AG04449 (cell line): ENCODE measurements at regions of chr14 and their contacts with region 1.

Region 1: DNA sequence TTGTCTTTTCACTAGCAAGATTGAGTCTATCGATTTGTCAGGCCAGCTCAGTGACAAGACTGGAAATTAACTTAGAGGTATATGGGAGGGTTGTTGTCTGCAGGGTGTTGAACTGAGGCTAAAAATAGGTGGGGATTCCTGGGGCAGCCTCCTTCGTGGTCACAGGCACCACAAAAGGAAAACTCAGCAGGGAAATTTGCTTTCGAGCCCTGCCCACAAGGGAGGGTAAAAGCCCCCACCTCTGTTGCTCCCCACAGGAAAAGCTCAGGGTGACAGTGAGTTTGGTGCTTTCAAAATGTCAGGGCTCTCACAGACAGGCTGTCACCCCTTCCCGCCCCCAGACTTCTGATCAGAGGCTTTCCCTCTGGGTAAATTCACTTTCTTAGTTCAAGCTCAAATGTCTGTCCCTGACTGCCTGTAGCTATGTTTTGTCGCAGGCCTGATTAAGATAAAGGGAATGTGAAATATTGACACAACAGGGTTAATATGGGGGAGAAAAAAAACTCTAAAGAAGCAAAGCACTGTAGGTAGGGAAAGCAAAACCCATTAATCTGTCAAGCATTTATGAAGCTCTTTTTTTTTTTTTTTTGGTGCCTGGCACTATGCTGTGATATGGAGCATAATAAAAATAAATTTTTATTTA is 11.7 kb upstream of the NFKBIA start:
- DNase-seq: no peak
- H3K4me3 ChIP-seq: no peak overlapping the region
- CTCF ChIP-seq: no peak

Region 2: DNA sequence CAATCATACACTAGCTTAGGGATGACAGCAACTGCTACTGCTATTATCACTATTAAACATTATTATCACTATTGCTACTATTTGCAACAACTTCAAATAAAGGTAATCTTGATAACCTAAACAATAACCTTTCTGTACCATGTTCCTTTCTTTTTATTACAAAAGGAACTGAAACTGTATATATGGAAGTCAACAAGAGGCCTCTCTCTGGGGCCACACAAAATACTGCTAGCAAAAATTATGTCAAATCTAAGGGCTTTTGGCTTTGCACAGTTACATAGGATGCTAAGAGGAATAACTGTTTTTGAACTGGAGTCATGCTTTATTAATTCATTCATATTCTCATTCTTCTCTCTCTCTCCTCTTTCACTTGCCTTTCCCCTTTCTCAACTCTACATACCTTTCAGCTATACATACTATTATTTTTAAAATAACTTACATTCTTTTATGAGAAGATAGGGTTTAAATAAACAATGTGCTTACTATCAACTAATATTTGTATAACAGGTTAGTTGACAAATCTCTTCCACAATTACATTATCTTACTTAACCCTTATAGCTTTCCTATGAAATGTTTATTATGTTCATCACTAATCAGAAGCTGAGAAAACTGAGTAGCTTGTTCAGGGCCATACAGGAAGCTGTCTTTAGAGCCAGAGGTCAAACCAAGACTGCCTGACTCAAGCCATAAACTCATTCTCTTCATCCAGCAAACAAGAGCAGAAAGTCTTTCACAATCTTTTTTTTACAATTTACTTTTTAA is 979.9 kb before region 1 on chr14:
- CTCF ChIA-PET with region 1: no interaction called
- POLR2A ChIA-PET with region 1: no interaction called
- DNase-seq: no peak
- H3K4me3 ChIP-seq: no peak overlapping the region
- CTCF ChIP-seq: no peak

Region 3: DNA sequence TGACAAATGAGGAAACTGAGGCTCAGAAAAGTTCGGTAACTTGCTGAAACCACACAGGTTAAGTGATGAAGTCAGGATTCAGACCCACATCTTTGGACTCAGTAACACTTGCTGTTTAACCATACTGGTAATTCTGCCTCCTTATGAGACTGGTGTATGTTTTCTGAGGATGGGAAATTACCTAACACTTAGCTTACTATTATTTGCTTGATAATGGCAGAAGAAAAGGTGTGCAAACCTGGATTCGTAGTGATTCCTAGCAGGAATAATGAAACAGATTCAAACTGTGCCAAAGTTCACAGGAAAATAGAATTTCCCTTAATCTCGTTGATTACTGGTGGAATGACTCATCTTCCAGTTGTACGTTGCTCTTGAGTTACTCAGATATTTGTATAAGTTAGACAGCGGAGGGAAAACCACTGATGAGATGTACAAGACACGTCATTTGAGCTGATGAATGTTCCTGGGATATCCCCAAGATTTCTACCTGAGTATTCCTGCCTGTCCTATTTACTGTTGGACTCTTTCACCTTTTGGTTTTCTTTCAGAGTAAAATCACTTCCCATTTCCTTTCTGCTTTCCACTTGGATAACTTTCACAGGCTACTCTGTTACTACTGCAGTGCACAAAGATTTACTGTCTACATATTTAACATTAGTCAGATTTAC is 256.4 kb before region 1 on chr14:
- CTCF ChIA-PET with region 1: interaction called, 17 read pairs
- POLR2A ChIA-PET with region 1: no interaction called
- DNase-seq: peak; percentile 83
- H3K4me3 ChIP-seq: no peak overlapping the region; the same call in 1 of the 2 replicates
- CTCF ChIP-seq: no peak

Region 4: DNA sequence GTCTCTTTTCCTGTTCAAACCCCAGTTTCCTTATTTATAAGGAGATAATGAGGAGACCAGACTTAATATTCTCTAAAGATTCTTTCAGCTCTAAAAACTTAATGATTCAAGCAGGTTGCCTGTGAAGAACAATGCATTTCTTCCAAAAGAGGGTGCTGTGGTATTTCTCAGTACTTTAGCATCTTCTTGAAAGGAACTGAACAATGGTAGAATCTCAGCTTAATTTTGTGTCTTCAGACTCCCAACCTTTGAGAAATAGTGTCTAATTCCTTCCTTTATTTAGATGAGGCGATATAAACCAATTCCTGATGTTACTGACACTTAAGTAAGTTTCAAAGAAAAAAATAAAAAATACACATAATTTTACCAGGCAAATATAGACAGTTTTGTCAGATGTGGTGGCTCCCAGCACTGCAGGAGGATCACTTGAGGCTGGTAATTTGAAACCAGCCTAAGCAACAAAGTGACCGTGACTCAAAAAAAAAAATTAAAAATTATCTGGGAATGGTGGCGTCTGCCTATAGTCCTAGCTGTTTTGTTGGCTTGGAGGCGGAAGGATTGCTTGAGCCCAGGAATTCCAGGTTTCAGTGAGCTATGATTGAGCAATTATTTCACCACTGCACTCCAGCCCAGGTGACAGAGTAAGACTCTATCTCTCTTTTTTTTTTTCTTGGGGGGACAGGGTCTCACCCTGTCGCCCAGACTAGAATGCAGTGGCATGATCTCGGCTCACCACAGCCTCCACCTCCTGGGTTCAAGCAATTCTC is 200.9 kb before region 1 on chr14:
- CTCF ChIA-PET with region 1: interaction called, 75 read pairs
- POLR2A ChIA-PET with region 1: interaction called, 3 read pairs
- DNase-seq: peak; percentile 29
- H3K4me3 ChIP-seq: no peak overlapping the region
- CTCF ChIP-seq: peak; percentile 45

Region 5: GRCh38 chr14:35390577-35391387 is 25.4 kb before region 1 on chr14:
- CTCF ChIA-PET with region 1: no interaction called
- POLR2A ChIA-PET with region 1: no interaction called
- DNase-seq: no peak
- H3K4me3 ChIP-seq: no peak overlapping the region
- CTCF ChIP-seq: no peak